Esophagus squamous epithelium (tissue), 5 donors: ENCODE measurements at regions of chr9 and their contacts with region 1.

Region 1: DNA sequence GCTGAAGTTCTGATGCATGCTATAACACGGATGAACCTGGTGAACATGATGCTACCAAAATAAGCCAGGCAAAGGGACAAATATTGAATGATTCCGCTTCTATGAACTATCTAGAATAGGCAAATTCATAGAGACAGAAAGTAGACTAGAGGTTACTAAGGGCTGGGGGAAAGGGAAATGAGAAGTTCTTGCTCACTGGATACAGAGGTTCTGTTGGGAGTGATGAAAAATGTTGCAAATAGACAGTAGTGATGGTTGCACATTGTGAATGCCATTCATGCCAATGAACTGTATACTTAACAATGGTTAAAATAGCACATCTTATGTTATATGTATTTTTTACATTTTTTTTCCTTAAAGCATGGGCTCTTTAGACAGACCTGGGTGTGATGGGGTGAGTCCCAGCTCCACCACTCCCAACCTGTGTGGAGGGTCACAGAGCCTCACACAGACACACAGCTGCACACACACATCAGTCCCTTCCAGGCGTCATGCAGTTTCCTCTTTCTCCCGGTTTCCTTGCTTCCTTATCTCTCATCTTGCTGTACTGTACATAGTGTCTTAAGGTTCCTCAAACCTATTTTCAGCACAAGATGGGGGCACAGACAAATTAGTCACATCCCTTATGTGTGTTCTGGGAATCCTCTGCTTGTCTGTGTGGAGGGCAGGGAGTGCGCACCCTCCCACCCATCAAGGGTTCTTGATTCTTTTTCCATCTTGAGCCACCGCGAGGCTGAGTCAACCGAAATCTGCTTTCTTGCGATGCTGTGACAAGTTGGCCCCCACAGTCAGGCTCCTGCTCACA is 192.9 kb downstream of the CRB2 start:
- DNase-seq: no peak
- H3K4me3 ChIP-seq: no peak overlapping the region
- H3K27ac ChIP-seq: no peak overlapping the region
- H3K4me1 ChIP-seq: no peaks in the 10 kb centered on the region
- H3K27me3 ChIP-seq: no peaks in the 10 kb centered on the region
- CTCF ChIP-seq: no peak
- POLR2A ChIP-seq: no peak

Region 2: GRCh38 chr9:123434619-123435528 is 114.1 kb before region 1 on chr9:
- intact Hi-C with region 1: no loop called
- DNase-seq: no peak
- H3K4me3 ChIP-seq: no peak overlapping the region
- H3K27ac ChIP-seq: no peak overlapping the region
- H3K4me1 ChIP-seq: no peaks in the 10 kb centered on the region
- H3K27me3 ChIP-seq: no peaks in the 10 kb centered on the region
- CTCF ChIP-seq: no peak
- POLR2A ChIP-seq: no peak

Region 3: GRCh38 chr9:124040935-124041816 is 492.2 kb after region 1 on chr9:
- intact Hi-C with region 1: loop called (anchors 5 kb)
- DNase-seq: no peak
- H3K4me3 ChIP-seq: peak overlapping the region in 3 of 4 donors; percentile 21 to 62 (median 41)
- H3K27ac ChIP-seq: no peak overlapping the region
- H3K4me1 ChIP-seq: peaks cover 19 to 37% (median 26%) of the 10 kb centered on the region in 3 donors
- H3K27me3 ChIP-seq: peaks cover 0 to 95% (median 4%) of the 10 kb centered on the region in 4 donors
- CTCF ChIP-seq: peak; percentile 80 to 91 (median 86)
- POLR2A ChIP-seq: no peak